OCI-LY7 (cell line): ENCODE measurements at regions of chr20 and their contacts with region 1.

Region 1: GRCh38 chr20:46757754-46758678 is 48.6 kb downstream of the SLC2A10 start:
- DNase-seq: peak; percentile 82
- H3K4me3 ChIP-seq: no peak overlapping the region
- H3K27ac ChIP-seq: no peak overlapping the region
- H3K4me1 ChIP-seq: peaks cover 38% of the 10 kb centered on the region
- CTCF ChIP-seq: peak; percentile 97

Region 2: DNA sequence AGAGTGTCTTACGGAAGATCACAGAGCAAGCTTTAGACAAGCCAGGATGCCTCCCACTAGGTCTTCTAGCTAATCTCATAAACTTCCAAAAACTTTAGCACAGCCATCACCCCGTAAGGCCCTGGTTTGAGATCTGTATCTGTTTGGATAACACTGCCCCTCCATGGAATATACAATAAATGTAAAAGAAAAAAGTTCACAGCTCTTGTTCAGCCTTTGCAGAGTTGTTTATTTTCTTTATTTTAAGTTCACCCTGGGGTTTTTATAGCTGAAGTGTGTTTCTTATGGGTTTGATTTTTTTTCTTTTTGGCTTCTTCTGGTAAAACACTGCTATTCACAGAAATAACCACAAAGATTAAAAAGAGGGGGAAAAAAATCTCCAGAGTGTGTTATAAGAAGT is 262.2 kb after region 1 on chr20:
- CTCF ChIA-PET with region 1: no interaction called
- POLR2A ChIA-PET with region 1: no interaction called
- intact Hi-C with region 1: loop called (anchors 2 kb)
- DNase-seq: no peak
- H3K4me3 ChIP-seq: no peak overlapping the region
- H3K27ac ChIP-seq: no peak overlapping the region
- H3K4me1 ChIP-seq: peaks cover 14% of the 10 kb centered on the region
- CTCF ChIP-seq: peak; percentile 61

Region 3: GRCh38 chr20:47150403-47151152 is 392.6 kb after region 1 on chr20:
- CTCF ChIA-PET with region 1: no interaction called
- POLR2A ChIA-PET with region 1: no interaction called
- intact Hi-C with region 1: loop called (anchors 1 kb)
- DNase-seq: peak; percentile 73
- H3K4me3 ChIP-seq: no peak overlapping the region
- H3K27ac ChIP-seq: no peak overlapping the region
- H3K4me1 ChIP-seq: no peaks in the 10 kb centered on the region
- CTCF ChIP-seq: peak; percentile 91